ENCODE measurements at regions of chr1 and their contacts with region 1.

Region 1: GRCh38 chr1:159675046-159675445 is 39.3 kb downstream of the CRP start:
- DNase-seq: no peak
- H3K4me3 ChIP-seq: no peak overlapping the region
- H3K27ac ChIP-seq: no peak overlapping the region
- H3K4me1 ChIP-seq: no peaks in the 10 kb centered on the region
- H3K27me3 ChIP-seq: no peaks in the 10 kb centered on the region
- CTCF ChIP-seq: no peak

Region 2: GRCh38 chr1:159444511-159444910 is 230.5 kb before region 1 on chr1:
- intact Hi-C with region 1: loop called (anchors 5 kb)
- DNase-seq: peak in 2 of 5 donors; percentile 64 to 73
- H3K4me3 ChIP-seq: no peak overlapping the region
- H3K27ac ChIP-seq: no peak overlapping the region
- H3K4me1 ChIP-seq: peaks cover 0 to 4% (median 0%) of the 10 kb centered on the region in 3 donors
- H3K27me3 ChIP-seq: no peaks in the 10 kb centered on the region
- CTCF ChIP-seq: no peak

Region 3: DNA sequence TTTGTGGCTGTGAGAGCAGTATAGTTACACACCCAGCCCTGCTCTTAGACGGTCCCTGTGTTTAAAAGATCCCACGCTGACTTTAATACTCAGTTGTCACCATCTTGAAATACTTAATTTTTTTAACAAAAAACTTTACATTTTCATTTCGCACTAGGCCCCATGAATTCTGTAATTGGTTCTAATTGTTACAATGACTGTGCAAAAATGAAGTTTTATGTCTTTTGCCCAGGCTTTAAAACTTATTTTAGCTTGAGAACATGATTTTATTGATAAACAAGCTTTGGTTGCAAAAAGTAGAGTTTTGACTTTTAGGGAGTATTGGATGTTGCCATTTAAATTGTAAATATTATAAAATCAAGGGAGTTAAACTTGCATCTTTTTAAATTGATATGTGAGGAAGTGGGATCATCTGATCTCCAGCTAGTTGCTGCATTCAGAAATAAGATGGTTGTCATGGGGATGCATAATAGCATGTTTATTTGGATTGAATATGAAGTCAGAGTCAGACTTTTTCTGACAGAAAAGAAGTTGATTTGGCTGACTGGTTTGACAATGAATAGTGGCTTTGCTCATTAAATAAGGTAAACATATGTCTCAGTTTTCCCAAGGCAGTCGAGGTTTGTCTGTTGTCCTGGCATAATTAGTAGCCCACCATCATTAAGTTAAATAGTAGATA is 62.3 kb after region 1 on chr1:
- intact Hi-C with region 1: no loop called
- DNase-seq: no peak
- H3K4me3 ChIP-seq: no peak overlapping the region
- H3K27ac ChIP-seq: no peak overlapping the region
- H3K4me1 ChIP-seq: no peaks in the 10 kb centered on the region
- H3K27me3 ChIP-seq: no peaks in the 10 kb centered on the region
- CTCF ChIP-seq: no peak